ENCODE measurements at regions of chr11 and their contacts with region 1.

Region 1: DNA sequence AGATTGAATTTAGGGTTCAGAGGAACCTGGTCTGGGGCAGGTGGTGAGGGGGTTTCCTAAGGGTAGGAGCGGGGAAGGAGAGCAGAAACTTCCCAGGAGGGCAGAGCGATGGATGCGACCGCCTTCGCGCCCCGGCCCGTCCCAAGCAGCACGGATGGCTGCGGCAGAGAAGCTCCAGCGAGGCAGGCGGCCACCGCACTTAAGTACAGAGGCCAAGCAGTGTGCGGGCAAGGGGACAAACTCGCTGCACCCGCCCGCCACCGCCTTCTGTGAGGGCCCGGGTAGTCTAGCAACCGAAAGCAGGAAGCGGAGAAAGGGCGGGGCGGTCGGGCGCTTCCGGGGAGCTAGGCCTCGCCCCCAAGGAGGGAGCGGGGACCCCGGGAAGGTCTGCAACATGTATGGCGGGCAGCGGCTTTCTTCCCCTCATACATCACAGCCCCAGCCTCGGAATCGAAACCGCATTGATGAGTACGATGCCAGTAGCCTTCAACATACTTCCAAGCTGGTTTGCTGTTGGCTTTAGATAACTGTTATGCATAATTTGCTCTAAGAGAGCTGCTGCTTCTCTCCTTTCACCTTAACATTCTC is at the start of gene AGBL2:
- DNase-seq: peak; percentile 89
- ATAC-seq: peak; percentile 99
- H3K4me3 Mint-ChIP-seq: peak within 1 kb of the TSS; percentile 96
- H3K27ac Mint-ChIP-seq: peak within 1 kb of the TSS; percentile 96
- H3K4me1 Mint-ChIP-seq: peaks cover 16% of the 10 kb centered on the region
- H3K27me3 Mint-ChIP-seq: no peaks in the 10 kb centered on the region
- total RNA-seq, gene AGBL2: 7.7 to 8.3 TPM

Region 2: DNA sequence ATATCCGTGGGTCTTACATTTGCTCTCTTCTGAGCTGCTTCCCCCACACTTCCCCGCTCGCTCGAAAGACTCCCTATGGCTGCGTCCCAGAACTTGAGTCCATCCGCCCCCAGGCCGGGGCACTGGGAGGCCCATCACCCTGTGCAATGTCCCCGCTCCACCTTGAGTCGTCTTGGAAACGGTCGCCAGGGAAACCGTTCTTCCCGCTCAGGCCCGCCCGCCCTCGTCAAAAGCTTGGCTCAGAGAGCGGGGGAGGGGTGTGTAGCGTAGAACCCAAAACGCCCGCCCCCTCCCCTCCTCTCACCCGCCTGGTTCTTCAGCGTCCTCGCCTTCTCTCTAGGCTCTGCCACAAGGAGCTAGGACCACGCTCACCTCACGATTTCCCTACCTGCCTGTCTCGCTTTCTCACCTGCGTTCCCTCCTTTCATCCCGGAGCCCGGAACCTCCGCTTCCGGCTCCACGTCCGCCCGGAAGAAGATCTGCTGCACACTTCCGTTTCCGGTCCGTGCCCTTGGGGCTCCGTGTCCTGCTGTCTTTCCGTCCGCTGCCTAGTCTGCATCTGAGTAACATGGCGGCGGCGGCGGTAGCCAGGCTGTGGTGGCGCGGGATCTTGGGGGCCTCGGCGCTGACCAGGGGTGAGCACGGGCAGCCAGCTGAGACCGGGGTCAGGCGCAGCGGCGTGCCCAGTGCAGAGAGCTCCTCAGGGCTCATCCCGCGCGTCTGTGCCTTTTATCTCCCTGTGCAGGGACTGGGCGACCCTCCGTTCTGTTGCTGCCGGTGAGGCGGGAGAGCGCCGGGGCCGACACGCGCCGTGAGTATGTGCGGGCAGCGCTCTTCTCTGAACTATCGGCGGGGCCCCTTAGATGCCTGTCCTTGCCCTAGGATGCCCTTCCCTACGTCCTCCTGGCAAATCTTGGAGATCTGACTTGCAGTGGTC is 136.4 kb before region 1 on chr11 and contains the starts of genes KBTBD4 and NDUFS3:
- POLR2A ChIA-PET with region 1: interaction called, 10 read pairs
- DNase-seq: peak; percentile 94
- ATAC-seq: peak; percentile 95
- H3K4me3 Mint-ChIP-seq: peak within 1 kb of the TSS; percentile 99
- H3K27ac Mint-ChIP-seq: peak within 1 kb of the TSS; percentile 96
- H3K4me1 Mint-ChIP-seq: peaks cover 19% of the 10 kb centered on the region
- H3K27me3 Mint-ChIP-seq: no peaks in the 10 kb centered on the region
- total RNA-seq, gene KBTBD4: 18.8 to 19.0 TPM
- total RNA-seq, gene NDUFS3: 105 to 108 TPM

Region 3: DNA sequence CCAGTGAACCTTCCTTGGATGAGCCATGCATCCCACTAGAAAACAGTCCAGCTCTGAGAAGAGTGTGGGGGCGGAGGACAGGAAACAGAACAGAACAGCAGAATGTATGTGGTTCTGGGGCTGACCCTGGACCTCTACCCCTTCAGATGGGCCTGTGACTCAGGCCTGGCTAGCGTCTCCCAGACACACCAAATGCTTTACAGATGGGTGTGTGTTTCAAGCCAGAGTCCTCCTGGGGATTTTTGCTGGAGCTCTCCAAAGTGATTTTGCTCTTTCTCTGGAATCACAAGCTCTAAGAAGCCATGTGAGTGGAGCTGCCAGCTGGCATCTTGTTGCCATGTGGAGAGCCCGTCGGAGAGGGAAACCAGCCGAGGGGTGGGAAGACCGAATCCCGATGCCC is 107.8 kb before region 1 on chr11:
- POLR2A ChIA-PET with region 1: no interaction called
- DNase-seq: no peak
- ATAC-seq: no peak
- H3K4me3 Mint-ChIP-seq: no peak overlapping the region
- H3K27ac Mint-ChIP-seq: no peak overlapping the region
- H3K4me1 Mint-ChIP-seq: peaks cover 9% of the 10 kb centered on the region
- H3K27me3 Mint-ChIP-seq: no peaks in the 10 kb centered on the region

Region 4: DNA sequence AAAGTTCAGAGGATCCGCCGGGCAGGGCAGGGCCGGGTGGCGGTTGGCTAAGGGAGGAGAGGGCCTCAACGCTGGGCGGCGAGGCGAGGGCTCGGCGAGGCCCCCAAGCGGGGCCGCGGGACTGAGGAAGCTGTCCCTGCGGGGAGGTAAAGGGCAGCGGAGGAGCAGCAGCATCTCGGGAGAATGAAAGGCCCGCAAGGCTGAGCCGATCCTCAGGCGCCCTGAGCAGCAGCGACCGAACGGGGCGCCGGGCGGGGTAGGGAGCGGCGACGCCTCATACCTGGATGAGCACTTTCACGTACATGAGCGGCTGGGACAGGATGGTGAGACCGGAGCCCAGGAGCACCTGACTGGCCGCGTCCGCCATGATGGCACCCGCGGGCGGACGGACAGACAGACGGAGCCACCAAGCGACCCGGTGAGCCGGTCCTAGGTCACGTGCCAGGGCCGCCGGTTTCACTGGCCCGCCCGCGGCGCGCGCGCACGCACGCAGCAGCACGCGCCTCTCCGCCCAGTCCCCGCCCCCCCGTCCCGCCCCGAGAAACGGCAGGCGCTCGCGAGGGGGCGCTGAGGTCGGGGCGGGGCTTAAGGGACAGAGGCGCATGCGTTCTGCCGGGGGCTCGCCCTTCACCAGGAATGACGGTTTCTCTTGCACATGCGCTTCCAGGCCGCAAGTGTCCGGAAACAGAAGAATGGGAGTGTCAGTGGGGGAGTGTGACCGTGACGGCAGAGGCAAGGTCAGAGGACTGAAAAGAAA is 72.9 kb before region 1 on chr11 and contains the start of gene MTCH2:
- POLR2A ChIA-PET with region 1: interaction called, 29 read pairs
- DNase-seq: peak; percentile 97
- ATAC-seq: peak; percentile 88
- H3K4me3 Mint-ChIP-seq: peak within 1 kb of the TSS; percentile 95
- H3K27ac Mint-ChIP-seq: peak within 1 kb of the TSS; percentile 98
- H3K4me1 Mint-ChIP-seq: peaks cover 21% of the 10 kb centered on the region
- H3K27me3 Mint-ChIP-seq: no peaks in the 10 kb centered on the region
- total RNA-seq, gene MTCH2: 61.4 to 66.8 TPM

Region 5: GRCh38 chr11:47667135-47667534 is 48.0 kb before region 1 on chr11:
- POLR2A ChIA-PET with region 1: no interaction called
- DNase-seq: no peak
- ATAC-seq: no peak
- H3K4me3 Mint-ChIP-seq: no peak overlapping the region
- H3K27ac Mint-ChIP-seq: no peak overlapping the region
- H3K4me1 Mint-ChIP-seq: peaks cover 5% of the 10 kb centered on the region
- H3K27me3 Mint-ChIP-seq: no peaks in the 10 kb centered on the region

Region 6: DNA sequence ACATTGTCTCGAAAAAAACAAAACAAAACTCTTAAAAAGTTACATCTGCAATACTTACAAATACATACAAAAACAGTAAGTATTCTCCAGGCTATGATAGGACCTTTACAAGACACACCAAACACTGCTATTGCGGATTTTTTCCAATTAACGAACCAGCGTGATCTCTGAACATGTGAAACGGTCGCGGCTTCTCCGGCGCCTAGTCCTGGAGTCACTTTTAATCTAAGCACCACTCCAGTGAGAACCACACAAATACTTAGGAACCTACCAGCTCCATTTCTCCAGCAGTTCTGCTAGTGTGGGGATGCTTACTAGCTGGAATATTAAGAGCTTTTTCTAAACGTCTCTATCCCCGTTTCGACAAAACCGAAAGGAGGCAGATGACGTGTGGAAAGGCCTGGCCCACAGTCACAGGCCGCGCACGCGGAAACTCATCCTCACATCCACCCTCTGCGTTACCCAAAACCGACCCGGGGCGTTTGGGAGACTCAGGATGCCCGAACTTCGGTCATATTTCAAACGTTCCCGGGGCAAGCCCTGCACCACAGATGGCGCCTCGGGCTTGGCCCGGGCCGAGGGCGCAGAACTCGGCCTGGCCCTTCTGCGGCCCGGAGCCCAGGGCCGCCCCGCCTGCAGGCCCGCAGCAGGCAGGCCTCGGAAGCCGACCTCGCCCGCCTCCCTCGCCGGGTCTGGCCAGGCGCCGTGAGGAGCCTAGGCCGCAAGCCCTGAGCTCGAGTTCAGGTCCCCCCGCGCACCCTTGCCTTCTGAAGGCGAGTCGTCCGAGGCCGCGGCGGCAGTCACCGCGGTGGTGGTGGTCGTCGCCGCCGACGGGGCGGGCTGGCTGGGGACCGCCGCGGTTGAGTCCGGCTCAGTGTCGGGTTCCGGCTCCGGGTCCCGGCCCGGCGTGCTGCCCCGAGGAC is 51.4 kb after region 1 on chr11:
- POLR2A ChIA-PET with region 1: interaction called, 13 read pairs
- DNase-seq: peak; percentile 79
- ATAC-seq: peak; percentile 31
- H3K4me3 Mint-ChIP-seq: peak overlapping the region; percentile 95
- H3K27ac Mint-ChIP-seq: peak overlapping the region; percentile 99
- H3K4me1 Mint-ChIP-seq: peaks cover 15% of the 10 kb centered on the region
- H3K27me3 Mint-ChIP-seq: no peaks in the 10 kb centered on the region

Region 7: GRCh38 chr11:47778878-47779483 is 63.8 kb after region 1 on chr11:
- POLR2A ChIA-PET with region 1: no interaction called
- DNase-seq: no peak
- ATAC-seq: no peak
- H3K4me3 Mint-ChIP-seq: no peak overlapping the region
- H3K27ac Mint-ChIP-seq: no peak overlapping the region
- H3K4me1 Mint-ChIP-seq: no peaks in the 10 kb centered on the region
- H3K27me3 Mint-ChIP-seq: no peaks in the 10 kb centered on the region

Measured in activated naive CD8-positive, alpha-beta T cell treated with anti-CD3 and anti-CD28 coated beads, Interleukin-2, amount 10 ng/mL, durations not matched to agents 7 days and 5 days (primary cell).